ENCODE measurements at regions of chr11 and their contacts with region 1.

Region 1: DNA sequence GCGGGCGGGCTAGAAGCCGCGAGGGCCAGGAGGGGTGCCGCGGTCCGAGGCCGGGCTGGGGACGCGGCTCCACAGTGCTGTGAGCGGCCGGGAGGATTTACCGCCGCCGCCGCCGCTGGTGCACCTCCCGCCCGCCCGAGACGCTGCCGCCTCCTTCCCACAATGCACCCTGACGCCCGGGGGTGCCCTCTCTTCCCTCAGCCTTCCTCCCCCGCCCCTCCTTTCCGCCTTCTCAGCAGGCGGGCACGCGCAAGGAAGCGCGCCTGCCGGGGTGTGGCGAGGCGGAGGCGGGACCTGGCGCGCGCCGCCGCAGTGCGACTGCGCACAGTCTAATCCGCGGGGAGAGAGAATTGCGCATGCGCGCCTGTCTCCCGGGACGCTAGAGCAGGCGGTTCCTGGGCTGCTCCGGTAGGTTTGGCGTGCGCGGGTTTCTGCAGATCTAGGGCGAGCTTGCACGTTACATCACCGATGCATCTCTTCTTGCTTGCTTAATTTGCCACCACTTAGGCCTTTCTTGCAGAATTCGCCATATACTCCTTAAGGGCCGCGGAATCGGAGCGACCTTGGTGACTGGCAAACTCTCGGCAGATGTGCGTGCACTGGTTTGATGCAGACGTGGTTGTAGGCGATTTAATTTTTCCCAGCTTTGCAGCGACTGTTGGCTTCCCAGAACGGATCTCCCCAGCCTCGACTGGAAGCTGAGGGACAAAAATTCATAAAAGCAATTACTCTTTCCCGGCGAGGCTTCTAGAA is at the starts of genes GVQW3 and THAP12:
- DNase-seq: peak; percentile 93 to 99 (median 97)
- ATAC-seq: peak; percentile 89
- H3K4me3 ChIP-seq: peak within 1 kb of the TSS; percentile 62 to 64
- H3K4me3 Mint-ChIP-seq: peak within 1 kb of the TSS; percentile 94
- H3K27ac ChIP-seq: peak within 1 kb of the TSS; percentile 46 to 56
- H3K27ac Mint-ChIP-seq: peak within 1 kb of the TSS; percentile 90
- H3K4me1 ChIP-seq: peaks cover 34% of the 10 kb centered on the region
- H3K4me1 Mint-ChIP-seq: peaks cover 67% of the 10 kb centered on the region
- H3K27me3 ChIP-seq: no peaks in the 10 kb centered on the region
- H3K27me3 Mint-ChIP-seq: no peaks in the 10 kb centered on the region
- CTCF ChIP-seq: no peak
- total RNA-seq, gene GVQW3: 1.4 to 1.6 TPM
- total RNA-seq, gene THAP12: 44.7 to 47.2 TPM

Region 2: DNA sequence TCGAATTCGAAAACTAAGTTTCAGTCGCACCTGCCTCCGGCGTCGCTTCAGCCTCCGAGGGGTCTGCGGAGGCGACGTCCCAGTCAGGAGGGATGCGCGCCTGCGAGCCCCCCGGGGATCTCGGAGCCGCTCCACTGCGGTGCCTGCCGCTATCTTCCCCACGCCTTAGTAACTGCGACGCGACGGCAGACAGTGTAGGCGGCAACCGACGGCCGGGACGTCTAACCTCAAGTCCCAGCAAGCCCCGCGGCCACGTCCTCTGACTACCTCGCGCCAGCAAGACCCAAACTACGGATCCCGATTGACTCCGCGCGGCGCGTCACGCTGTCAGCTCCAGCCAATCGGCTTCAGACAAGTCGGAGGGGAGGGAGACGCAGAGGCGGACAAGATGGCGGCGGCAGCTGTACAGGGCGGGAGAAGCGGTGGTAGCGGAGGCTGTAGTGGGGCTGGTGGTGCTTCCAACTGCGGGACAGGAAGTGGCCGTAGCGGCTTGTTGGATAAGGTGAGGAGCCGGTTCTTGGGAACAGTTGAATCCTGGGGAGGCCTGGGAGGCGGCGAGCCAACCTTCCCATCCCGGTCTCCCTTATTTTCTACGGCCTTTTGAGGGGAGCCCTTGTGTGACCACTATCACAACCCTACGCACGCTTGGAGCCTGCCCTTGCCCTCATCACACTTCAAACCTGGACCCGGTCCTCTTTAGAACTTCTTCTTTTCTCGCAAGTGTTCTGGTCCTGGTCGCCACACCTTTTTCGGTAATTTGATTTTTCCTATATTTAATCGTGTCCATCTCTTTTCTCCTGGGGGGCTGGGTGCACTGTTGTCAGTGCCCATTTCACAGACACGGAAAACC is 1432.0 kb before region 1 on chr11 and contains the starts of genes SPCS2 and XRRA1:
- CTCF ChIA-PET with region 1: no interaction called
- POLR2A ChIA-PET with region 1: no interaction called
- intact Hi-C with region 1: loop called in 1 of 2 experiments (anchors 5 kb)
- DNase-seq: peak; percentile 95 to 99 (median 97)
- ATAC-seq: peak; percentile 95
- H3K4me3 ChIP-seq: peak within 1 kb of the TSS; percentile 86 to 90
- H3K4me3 Mint-ChIP-seq: peak within 1 kb of the TSS; percentile 92
- H3K27ac ChIP-seq: peak within 1 kb of the TSS; percentile 80 to 88
- H3K27ac Mint-ChIP-seq: peak within 1 kb of the TSS; percentile 95
- H3K4me1 ChIP-seq: peaks cover 31% of the 10 kb centered on the region
- H3K4me1 Mint-ChIP-seq: peaks cover 63% of the 10 kb centered on the region
- H3K27me3 ChIP-seq: no peaks in the 10 kb centered on the region
- H3K27me3 Mint-ChIP-seq: no peaks in the 10 kb centered on the region
- CTCF ChIP-seq: no peak
- total RNA-seq, gene SPCS2: 38.1 to 42.3 TPM
- total RNA-seq, gene XRRA1: 19.2 to 20.9 TPM

Region 3: GRCh38 chr11:75399344-75400145 is 981.6 kb before region 1 on chr11 and contains the start of gene RPS3:
- CTCF ChIA-PET with region 1: no interaction called
- POLR2A ChIA-PET with region 1: no interaction called
- intact Hi-C with region 1: loop called in 1 of 2 experiments (anchors 10 kb)
- DNase-seq: peak; percentile 72 to 93 (median 88)
- ATAC-seq: peak; percentile 88
- H3K4me3 ChIP-seq: peak within 1 kb of the TSS; percentile 69 to 76
- H3K4me3 Mint-ChIP-seq: peak within 1 kb of the TSS; percentile 95
- H3K27ac ChIP-seq: peak within 1 kb of the TSS; percentile 88 to 89
- H3K27ac Mint-ChIP-seq: peak within 1 kb of the TSS; percentile 95
- H3K4me1 ChIP-seq: peaks cover 28% of the 10 kb centered on the region
- H3K4me1 Mint-ChIP-seq: peaks cover 48% of the 10 kb centered on the region
- H3K27me3 ChIP-seq: no peaks in the 10 kb centered on the region
- H3K27me3 Mint-ChIP-seq: no peaks in the 10 kb centered on the region
- CTCF ChIP-seq: no peak
- total RNA-seq, gene RPS3: 4,683 to 5,039 TPM

Region 4: DNA sequence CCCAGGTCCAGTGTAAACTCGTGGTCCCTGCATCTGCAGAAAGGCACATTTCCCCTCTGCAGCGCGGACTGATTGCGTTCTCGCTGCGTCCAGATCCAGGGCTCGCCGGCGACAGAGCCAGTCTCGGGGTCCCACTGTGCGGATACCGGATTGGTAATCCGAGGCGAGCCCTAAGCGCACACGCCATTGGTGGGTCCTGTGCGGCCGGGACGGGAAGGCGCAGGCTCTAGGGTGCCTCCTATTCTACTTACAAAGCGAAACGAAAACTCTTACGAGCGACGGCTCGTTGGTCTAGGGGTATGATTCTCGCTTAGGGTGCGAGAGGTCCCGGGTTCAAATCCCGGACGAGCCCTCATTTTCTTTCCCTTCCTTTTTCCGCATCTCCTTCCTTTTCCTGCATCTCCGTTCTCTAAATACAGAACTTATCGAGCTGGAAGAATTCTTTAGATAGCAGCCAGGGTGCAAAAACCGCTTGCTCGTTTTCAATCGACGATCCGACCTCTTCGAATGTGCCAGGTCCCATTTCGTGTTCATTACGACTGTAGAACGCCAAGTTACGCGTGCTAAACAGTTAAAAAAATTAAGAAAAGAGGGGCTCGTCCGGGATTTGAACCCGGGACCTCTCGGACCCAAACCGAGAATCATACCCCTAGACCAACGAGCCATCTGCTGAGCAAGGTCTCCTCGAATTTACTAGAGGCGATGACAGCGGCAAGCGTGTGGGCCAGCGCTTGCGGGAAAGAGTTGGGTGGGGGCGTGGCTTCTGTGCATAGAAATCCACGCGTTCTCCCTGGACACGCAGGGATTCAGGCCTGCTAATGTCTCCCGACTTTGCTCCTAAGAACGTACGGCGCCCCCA is 145.7 kb before region 1 on chr11:
- CTCF ChIA-PET with region 1: no interaction called
- POLR2A ChIA-PET with region 1: no interaction called
- intact Hi-C with region 1: loop called (anchors 1 kb)
- DNase-seq: peak; percentile 84 to 96 (median 89)
- ATAC-seq: peak; percentile 84
- H3K4me3 ChIP-seq: peak overlapping the region; percentile 86 to 99
- H3K4me3 Mint-ChIP-seq: peak overlapping the region; percentile 90
- H3K27ac ChIP-seq: peak overlapping the region; percentile 61 to 63
- H3K27ac Mint-ChIP-seq: peak overlapping the region; percentile 89
- H3K4me1 ChIP-seq: peaks cover 47% of the 10 kb centered on the region
- H3K4me1 Mint-ChIP-seq: peaks cover 39% of the 10 kb centered on the region
- H3K27me3 ChIP-seq: no peaks in the 10 kb centered on the region
- H3K27me3 Mint-ChIP-seq: no peaks in the 10 kb centered on the region
- CTCF ChIP-seq: no peak

Region 5: DNA sequence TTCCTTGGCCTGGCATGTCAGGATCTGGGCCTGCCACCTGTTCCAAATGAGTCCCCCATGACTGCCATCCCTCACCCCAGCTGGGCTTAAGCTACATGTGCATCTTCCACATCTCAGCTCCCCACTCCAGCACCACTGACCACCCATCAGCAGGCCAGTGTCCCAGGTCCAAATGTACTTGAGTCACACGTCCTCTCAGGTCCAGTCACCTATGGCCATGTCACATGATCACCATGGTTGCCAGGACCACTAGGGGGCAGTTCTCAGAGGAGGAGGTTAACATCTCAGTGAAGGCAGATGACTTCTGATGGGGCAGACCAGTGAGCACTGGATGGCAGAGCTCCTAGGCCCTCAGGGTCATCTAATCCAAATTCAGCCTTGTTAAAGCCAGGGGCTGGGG is 132.9 kb before region 1 on chr11:
- CTCF ChIA-PET with region 1: no interaction called
- POLR2A ChIA-PET with region 1: no interaction called
- intact Hi-C with region 1: no loop called
- DNase-seq: peak in 2 of 9 experiments; percentile 20 to 27
- ATAC-seq: no peak
- H3K4me3 ChIP-seq: no peak overlapping the region
- H3K4me3 Mint-ChIP-seq: no peak overlapping the region
- H3K27ac ChIP-seq: no peak overlapping the region
- H3K27ac Mint-ChIP-seq: no peak overlapping the region
- H3K4me1 ChIP-seq: no peaks in the 10 kb centered on the region
- H3K4me1 Mint-ChIP-seq: no peaks in the 10 kb centered on the region
- H3K27me3 ChIP-seq: no peaks in the 10 kb centered on the region
- H3K27me3 Mint-ChIP-seq: no peaks in the 10 kb centered on the region
- CTCF ChIP-seq: no peak

Region 6: DNA sequence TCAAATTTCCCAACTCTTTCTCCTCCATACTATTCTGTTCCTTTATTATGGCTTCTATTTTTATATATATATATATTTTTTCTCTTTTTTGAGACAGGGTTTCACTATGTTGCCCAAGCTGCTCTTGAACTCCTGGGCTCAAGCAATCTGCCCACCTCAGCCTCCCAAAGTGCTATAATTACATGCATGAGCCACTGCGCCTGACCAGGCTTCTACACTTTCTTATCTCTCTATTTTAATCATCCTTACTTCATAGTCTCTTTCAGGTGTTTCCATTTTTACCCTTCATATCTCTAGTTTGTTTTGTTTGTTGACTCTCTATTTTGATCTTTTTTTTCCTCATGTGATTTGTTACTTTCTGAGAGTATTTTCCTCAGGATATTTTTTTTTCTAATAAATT is 19.8 kb after region 1 on chr11:
- CTCF ChIA-PET with region 1: no interaction called
- POLR2A ChIA-PET with region 1: no interaction called
- intact Hi-C with region 1: no loop called
- DNase-seq: no peak
- ATAC-seq: no peak
- H3K4me3 ChIP-seq: no peak overlapping the region
- H3K4me3 Mint-ChIP-seq: no peak overlapping the region
- H3K27ac ChIP-seq: no peak overlapping the region
- H3K27ac Mint-ChIP-seq: no peak overlapping the region
- H3K4me1 ChIP-seq: no peaks in the 10 kb centered on the region
- H3K4me1 Mint-ChIP-seq: no peaks in the 10 kb centered on the region
- H3K27me3 ChIP-seq: no peaks in the 10 kb centered on the region
- H3K27me3 Mint-ChIP-seq: no peaks in the 10 kb centered on the region
- CTCF ChIP-seq: no peak

Region 7: DNA sequence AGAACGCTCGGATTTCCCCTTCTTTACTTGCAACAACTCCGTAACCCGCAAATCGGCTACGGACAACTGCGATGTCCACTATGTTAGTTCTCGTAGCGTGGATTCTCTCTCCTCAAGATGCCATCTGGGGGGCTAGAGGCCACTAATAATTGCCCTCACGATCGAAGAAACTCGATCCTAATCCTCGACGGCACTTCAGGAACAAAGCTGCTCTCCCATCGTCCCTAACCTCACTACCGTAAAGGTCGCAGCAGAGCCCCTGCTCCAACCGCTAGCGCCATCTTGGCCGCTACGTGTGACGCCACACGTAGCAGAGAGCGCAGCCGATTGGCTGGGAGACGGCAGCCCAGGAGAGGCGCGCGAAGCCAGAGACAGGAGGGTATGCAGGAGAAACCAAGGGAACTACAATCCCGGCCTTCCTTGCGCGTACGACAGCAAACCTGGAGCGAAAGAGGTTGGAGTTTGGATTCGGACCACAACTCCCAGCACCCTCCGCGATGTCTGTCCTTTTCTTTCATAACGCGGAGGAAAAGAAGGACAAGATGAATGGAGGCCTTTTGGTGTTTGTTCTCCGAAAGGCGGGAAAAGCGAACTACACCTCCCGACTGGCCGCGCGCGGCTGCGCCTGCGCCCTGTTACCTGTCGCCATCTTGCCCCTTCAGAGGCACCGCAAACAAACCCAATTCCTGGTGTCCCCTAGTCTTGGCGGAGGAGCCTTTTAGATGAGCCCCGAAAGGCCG is 63.4 kb after region 1 on chr11 and contains the start of gene EMSY:
- CTCF ChIA-PET with region 1: no interaction called
- POLR2A ChIA-PET with region 1: interaction called, 4 read pairs
- intact Hi-C with region 1: loop called (anchors 1 kb)
- DNase-seq: peak; percentile 77 to 97 (median 90)
- ATAC-seq: peak; percentile 91
- H3K4me3 ChIP-seq: peak within 1 kb of the TSS; percentile 58 to 100
- H3K4me3 Mint-ChIP-seq: peak within 1 kb of the TSS; percentile 94
- H3K27ac ChIP-seq: peak within 1 kb of the TSS; percentile 70 to 97
- H3K27ac Mint-ChIP-seq: peak within 1 kb of the TSS; percentile 96
- H3K4me1 ChIP-seq: peaks cover 20% of the 10 kb centered on the region
- H3K4me1 Mint-ChIP-seq: peaks cover 38% of the 10 kb centered on the region
- H3K27me3 ChIP-seq: no peaks in the 10 kb centered on the region
- H3K27me3 Mint-ChIP-seq: no peaks in the 10 kb centered on the region
- CTCF ChIP-seq: no peak
- total RNA-seq, gene EMSY: 19.8 to 20.7 TPM

Region 8: DNA sequence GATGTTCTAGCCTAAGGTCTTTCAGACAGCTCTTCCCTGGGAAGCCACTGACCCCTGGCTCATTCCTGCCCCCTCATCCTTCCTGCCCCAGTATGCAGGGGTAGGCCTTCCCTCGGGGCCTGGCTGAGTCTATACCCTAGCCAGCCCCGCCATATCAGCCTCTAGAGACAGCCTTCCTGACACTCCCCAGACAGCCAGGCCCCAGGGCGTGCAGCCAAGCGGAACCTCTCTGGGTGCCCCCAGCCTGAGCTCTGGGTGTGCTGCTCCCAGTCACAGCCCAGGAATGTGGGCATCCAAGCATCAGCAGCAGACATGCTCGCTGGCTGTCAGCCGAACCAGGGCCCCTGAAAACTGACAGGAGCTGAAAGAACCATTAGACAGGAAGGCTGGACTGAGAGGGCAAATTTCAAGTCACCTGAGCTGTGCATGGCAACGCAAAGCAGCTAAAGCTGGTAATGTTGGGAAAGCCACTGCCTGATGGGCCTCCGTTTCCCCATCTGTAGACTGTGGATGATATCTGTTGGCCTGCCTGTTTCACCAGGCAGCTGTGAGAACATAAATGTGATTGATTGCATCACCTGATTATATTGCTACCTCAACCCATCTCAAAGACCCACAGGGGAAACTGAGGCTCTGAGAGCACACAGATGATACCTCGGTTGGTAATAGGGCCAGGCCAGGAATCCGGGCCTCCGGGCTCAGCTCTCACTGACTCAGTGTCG is 196.2 kb after region 1 on chr11:
- CTCF ChIA-PET with region 1: no interaction called
- POLR2A ChIA-PET with region 1: no interaction called
- intact Hi-C with region 1: no loop called
- DNase-seq: no peak
- ATAC-seq: no peak
- H3K4me3 ChIP-seq: no peak overlapping the region
- H3K4me3 Mint-ChIP-seq: no peak overlapping the region
- H3K27ac ChIP-seq: no peak overlapping the region
- H3K27ac Mint-ChIP-seq: no peak overlapping the region
- H3K4me1 ChIP-seq: no peaks in the 10 kb centered on the region
- H3K4me1 Mint-ChIP-seq: no peaks in the 10 kb centered on the region
- H3K27me3 ChIP-seq: no peaks in the 10 kb centered on the region
- H3K27me3 Mint-ChIP-seq: peaks cover 12% of the 10 kb centered on the region
- CTCF ChIP-seq: no peak

Measured in CD8-positive, alpha-beta T cell (primary cell).